ENCODE measurements at regions of chr9 and their contacts with region 1.

Region 1: DNA sequence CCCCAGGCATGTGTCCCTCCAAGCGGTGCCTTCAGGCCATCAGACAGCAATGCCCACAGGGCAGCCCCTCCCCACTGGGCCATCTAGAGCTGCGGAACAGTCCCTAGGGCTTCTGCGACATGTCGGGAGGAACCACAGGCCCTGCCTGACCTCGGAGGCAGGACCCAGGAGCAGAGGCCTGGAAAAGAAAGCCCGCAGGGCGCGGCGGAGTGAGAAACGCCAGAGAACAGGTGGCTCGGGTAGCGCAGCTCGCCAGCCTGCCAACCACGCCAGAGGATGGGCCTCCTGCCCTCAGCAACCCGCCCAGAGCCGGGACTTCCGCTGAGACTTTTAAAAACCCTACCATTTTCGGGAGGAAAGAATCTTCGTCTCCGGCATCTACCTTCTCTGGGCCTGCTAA is 715 bp downstream of the LCN8 start:
- DNase-seq: no peak
- H3K4me3 ChIP-seq: no peak overlapping the region
- H3K27ac ChIP-seq: no peak overlapping the region
- H3K4me1 ChIP-seq: peaks cover 0 to 8% of the 10 kb centered on the region in 2 experiments; a peak in 1 of 4 replicates
- H3K27me3 ChIP-seq: no peaks in the 10 kb centered on the region
- CTCF ChIP-seq: no peak
- EP300 ChIP-seq: no peak
- RAD21 ChIP-seq: no peak

Region 2: DNA sequence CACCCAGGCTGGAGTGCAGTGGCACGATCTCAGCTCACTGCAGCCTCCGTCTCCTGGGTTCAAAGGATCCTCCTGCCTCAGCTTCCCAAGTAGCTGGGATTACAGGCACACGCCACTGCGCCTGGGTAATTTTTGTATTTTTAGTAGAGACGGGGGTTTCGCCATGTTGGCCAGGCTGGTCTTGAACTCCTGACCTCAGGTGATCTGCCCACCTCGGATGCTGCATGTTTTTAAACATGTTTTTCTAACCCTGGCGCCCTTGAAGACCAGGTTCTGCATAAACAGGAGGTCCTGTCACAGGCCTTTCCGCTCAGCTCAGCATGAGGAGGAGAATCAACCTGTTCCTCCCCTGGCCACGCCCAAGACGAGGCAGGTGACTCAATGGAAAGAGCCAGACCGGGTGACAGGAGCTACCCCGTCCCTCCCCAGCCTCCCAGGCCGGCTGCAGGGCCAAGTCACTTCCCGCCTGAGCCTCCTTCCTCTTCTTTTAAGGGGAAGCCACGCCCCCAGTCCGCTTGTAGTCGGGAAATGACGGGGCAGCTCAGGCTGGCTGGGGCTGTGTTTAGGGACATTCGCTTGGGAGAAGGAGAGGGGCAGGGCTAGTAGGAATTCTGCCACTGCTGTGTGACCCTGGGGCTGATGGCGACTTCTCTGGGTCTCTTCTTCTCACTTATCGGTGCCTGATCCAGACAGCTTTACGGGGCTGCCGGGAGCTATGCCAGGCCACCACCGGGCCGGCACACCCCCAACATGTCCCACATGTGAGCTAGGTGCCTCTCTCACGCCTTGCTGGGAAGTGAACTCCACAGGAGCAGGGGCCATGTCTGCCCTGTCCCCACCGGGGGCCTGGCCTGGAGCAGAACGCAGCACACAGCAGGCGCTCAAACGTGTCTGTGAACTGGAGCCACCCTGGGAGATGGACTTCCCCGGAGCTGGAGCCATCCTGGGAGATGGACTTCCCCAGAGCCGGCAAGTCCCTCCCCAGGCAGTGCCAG is 217.6 kb before region 1 on chr9:
- CTCF ChIA-PET with region 1: no interaction called
- POLR2A ChIA-PET with region 1: no interaction called
- DNase-seq: no peak
- H3K4me3 ChIP-seq: no peak overlapping the region
- H3K27ac ChIP-seq: no peak overlapping the region
- H3K4me1 ChIP-seq: peaks cover 0 to 7% of the 10 kb centered on the region in 2 experiments; a peak in 1 of 4 replicates
- H3K27me3 ChIP-seq: no peaks in the 10 kb centered on the region
- CTCF ChIP-seq: no peak
- EP300 ChIP-seq: no peak
- RAD21 ChIP-seq: no peak

Region 3: GRCh38 chr9:136728080-136728547 is 29.2 kb before region 1 on chr9:
- CTCF ChIA-PET with region 1: interaction called, 53 read pairs
- POLR2A ChIA-PET with region 1: interaction called, 6 read pairs
- DNase-seq: peak; percentile 98
- H3K4me3 ChIP-seq: peak overlapping the region; percentile 83 to 85
- H3K27ac ChIP-seq: peak overlapping the region in 1 of 2 experiments; percentile 63; a peak in 2 of 4 replicates
- H3K4me1 ChIP-seq: peaks cover 12 to 25% of the 10 kb centered on the region in 2 experiments; a peak in 2 of 4 replicates
- H3K27me3 ChIP-seq: no peaks in the 10 kb centered on the region
- CTCF ChIP-seq: peak; percentile 75
- EP300 ChIP-seq: peak in 1 of 2 experiments; percentile 49; a peak in 1 of 4 replicates
- RAD21 ChIP-seq: no peak

Region 4: GRCh38 chr9:136769710-136770191 is 12.4 kb after region 1 on chr9:
- CTCF ChIA-PET with region 1: interaction called, 22 read pairs
- POLR2A ChIA-PET with region 1: no interaction called
- DNase-seq: peak; percentile 96
- H3K4me3 ChIP-seq: peak overlapping the region in 1 of 2 experiments; percentile 25; a peak in 1 of 4 replicates
- H3K27ac ChIP-seq: no peak overlapping the region; a peak in 1 of 4 replicates
- H3K4me1 ChIP-seq: peaks cover 0 to 3% of the 10 kb centered on the region in 2 experiments; a peak in 1 of 4 replicates
- H3K27me3 ChIP-seq: no peaks in the 10 kb centered on the region; the same call in 1 of the 2 replicates
- CTCF ChIP-seq: peak; percentile 61
- EP300 ChIP-seq: no peak
- RAD21 ChIP-seq: peak; percentile 33; the same call in 1 of the 2 replicates

Region 5: GRCh38 chr9:136777359-136777758 is 20.0 kb after region 1 on chr9:
- CTCF ChIA-PET with region 1: interaction called, 10 read pairs
- POLR2A ChIA-PET with region 1: no interaction called
- DNase-seq: no peak
- H3K4me3 ChIP-seq: no peak overlapping the region
- H3K27ac ChIP-seq: no peak overlapping the region
- H3K4me1 ChIP-seq: no peaks in the 10 kb centered on the region
- H3K27me3 ChIP-seq: peaks cover 42% of the 10 kb centered on the region
- CTCF ChIP-seq: no peak
- EP300 ChIP-seq: no peak
- RAD21 ChIP-seq: no peak

Region 6: DNA sequence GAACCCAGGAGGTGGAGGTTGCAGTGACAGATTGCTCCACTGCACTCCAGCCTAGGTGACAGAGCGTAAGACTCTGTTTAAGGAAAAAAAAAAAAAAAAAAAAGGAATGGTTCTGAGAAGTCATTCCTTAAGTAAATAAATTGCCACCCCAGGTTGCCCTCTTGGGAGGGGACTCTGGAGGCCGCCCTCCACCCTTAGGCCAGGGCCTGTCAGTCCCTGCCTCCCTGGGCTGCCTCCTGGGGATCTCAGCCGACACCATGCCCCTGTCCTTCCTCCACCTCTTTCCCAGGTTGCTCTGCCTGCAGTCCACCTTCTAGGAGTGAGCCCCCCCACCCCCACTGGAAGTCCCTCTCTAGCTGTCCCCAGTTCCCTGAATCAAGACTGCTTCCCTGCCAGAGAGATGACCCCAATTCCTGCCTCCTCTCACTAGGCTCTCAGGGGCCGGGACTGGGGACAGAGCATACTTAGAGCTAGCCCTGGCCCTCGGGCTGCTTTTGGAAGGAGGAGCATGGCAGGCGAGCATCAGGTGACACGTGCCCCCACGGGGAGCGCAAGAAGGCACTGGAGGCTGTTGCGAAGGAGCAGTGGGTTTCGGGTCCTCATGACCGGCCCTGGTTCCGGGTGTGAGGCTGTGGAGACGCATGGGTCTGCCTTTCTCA is 138.6 kb after region 1 on chr9:
- CTCF ChIA-PET with region 1: no interaction called
- POLR2A ChIA-PET with region 1: no interaction called
- DNase-seq: no peak
- H3K4me3 ChIP-seq: no peak overlapping the region
- H3K27ac ChIP-seq: no peak overlapping the region
- H3K4me1 ChIP-seq: peaks cover 0 to under 1% of the 10 kb centered on the region in 2 experiments; a peak in 1 of 4 replicates
- H3K27me3 ChIP-seq: no peaks in the 10 kb centered on the region
- CTCF ChIP-seq: no peak
- EP300 ChIP-seq: no peak
- RAD21 ChIP-seq: no peak

Region 7: GRCh38 chr9:136982232-136983051 is 225.1 kb after region 1 on chr9 and contains the start of gene LCNL1:
- CTCF ChIA-PET with region 1: no interaction called
- POLR2A ChIA-PET with region 1: no interaction called
- DNase-seq: no peak
- H3K4me3 ChIP-seq: no peak within 1 kb of the TSS
- H3K27ac ChIP-seq: no peak within 1 kb of the TSS
- H3K4me1 ChIP-seq: peaks cover 0 to 10% of the 10 kb centered on the region in 2 experiments; a peak in 1 of 4 replicates
- H3K27me3 ChIP-seq: no peaks in the 10 kb centered on the region
- CTCF ChIP-seq: no peak
- EP300 ChIP-seq: no peak
- RAD21 ChIP-seq: no peak
- polyA plus RNA-seq, gene LCNL1: not detected in 2 replicates

Measured in SK-N-SH (cell line).